ENCODE measurements at regions of chr2 and their contacts with region 1.

Region 1: DNA sequence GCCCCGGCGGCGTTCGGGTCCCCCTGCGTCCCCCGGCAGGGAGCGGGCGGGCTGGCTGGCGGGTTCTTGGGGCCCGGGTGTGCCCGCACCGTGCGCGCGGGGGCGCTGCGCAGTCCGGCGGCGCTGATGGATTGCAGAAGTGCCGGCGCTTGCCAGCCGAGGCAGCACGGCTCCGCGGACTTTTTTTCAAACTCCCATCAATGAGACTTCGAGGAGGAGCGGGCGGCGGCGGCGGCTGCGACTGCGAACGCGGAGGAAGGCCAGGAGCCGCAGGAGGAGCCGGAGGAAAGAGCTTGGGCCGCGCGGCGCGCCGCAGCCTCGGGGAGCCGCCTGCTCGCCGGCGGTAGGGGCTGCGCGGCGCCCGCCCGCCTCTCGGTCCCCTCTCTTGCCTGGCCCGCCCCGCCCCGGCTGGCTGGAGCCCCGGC is at the start of gene GLI2:
- DNase-seq: peak; percentile 82
- ATAC-seq: peak; percentile 56
- H3K4me3 ChIP-seq: peak within 1 kb of the TSS; percentile 79
- H3K27ac ChIP-seq: 0 out of 2 replicates have a peak within 1 kb of the TSS, but pooled peaks have one; percentile 36
- H3K4me1 ChIP-seq: peaks cover 18% of the 10 kb centered on the region
- H3K27me3 ChIP-seq: no peaks in the 10 kb centered on the region
- CTCF ChIP-seq: peak; percentile 81
- total RNA-seq, gene GLI2: 4.0 and 30.3 TPM in 2 replicates

Region 2: GRCh38 chr2:120699292-120699691 is 36.5 kb before region 1 on chr2:
- CTCF ChIA-PET with region 1: interaction called, 3 read pairs
- POLR2A ChIA-PET with region 1: no interaction called
- intact Hi-C with region 1: loop called (anchors 5 kb)
- DNase-seq: no peak
- ATAC-seq: no peak
- H3K4me3 ChIP-seq: no peak overlapping the region
- H3K27ac ChIP-seq: no peak overlapping the region
- H3K4me1 ChIP-seq: peaks cover 23% of the 10 kb centered on the region
- H3K27me3 ChIP-seq: no peaks in the 10 kb centered on the region
- CTCF ChIP-seq: no peak

Region 3: DNA sequence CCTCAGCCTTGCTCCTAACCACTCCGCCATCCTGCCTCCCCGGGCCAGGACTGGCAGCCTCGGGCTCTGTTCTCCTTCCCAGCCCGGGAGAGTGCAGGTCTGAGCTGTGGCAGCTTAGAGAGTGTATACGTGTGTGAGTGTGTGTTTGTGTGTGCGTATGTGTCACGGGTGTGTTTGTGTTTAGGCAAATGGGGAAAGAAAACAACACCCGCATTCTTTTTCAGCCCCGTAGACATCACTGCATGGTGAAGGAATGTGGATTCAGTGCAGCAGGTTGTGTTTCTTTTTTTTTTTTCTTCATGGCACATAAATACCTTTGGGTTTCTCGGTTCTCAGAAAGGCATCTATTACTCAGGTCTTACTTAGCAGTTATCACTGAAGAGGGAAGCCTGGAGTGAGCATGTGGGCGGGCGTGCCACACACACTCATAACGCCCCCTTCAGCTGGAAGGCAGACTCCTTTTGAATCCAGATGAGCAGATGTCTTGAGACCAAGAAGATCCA is 44.1 kb after region 1 on chr2:
- CTCF ChIA-PET with region 1: no interaction called
- POLR2A ChIA-PET with region 1: interaction called, 3 read pairs
- intact Hi-C with region 1: loop called (anchors 5 kb)
- DNase-seq: peak; percentile 32
- ATAC-seq: peak; percentile 31; the same call in 1 of the 2 replicates
- H3K4me3 ChIP-seq: no peak overlapping the region
- H3K27ac ChIP-seq: no peak overlapping the region
- H3K4me1 ChIP-seq: peaks cover 16% of the 10 kb centered on the region
- H3K27me3 ChIP-seq: no peaks in the 10 kb centered on the region
- CTCF ChIP-seq: no peak; the same call in 1 of the 2 replicates

Region 4: DNA sequence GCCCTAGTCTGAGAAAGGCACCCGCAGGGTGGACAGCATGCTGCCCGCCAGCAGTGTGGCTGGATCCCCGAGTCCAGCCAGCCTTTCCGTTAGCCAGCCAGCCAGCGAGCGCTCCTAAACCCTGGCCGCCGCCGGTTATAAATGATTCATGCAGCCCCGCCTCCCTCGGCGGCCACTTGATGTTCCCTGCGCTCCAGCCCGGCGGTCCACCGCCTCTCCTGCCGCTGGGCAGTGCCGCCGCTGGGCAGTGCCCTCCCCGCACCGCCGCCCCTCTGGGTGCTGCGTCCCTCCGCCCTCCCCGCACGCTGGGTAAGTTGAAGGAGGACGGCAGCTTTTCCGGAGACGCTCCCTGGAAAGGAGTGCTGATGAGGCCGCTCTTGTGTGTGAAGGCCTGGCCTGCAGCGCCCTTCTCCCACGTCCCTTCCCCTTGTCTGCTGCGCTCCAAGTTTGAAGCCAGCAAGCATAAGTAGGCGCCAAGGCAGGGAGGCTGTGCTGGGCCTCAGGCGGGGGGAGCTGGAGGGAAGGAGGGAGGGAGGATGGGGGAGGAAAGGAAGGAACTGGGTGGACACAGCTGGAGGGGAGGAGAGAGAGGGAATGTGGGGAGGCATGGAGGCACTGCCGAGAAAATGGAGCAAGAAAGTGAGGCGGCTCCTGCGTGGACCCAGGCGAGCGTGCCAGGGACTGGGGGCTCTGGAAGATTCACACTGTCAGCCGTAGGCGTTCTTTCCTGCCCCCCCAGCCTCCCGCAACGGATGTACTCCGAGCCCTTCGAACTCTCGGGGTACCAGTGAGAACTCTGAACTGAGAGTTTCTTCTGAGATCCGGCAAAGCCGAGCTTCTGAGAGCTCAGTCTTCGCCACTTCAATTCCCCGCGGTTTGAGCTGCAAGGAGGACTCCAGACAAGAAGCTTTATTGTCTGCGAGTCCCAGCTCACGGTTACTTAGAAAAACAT is 131.8 kb after region 1 on chr2:
- CTCF ChIA-PET with region 1: interaction called, 4 read pairs
- POLR2A ChIA-PET with region 1: no interaction called
- intact Hi-C with region 1: loop called (anchors 5 kb)
- DNase-seq: peak; percentile 64
- ATAC-seq: peak; percentile 96
- H3K4me3 ChIP-seq: peak overlapping the region; percentile 46; the same call in 1 of the 2 replicates
- H3K27ac ChIP-seq: no peak overlapping the region
- H3K4me1 ChIP-seq: peaks cover 21% of the 10 kb centered on the region
- H3K27me3 ChIP-seq: no peaks in the 10 kb centered on the region
- CTCF ChIP-seq: no peak

Region 5: GRCh38 chr2:120934574-120935340 is 199.0 kb after region 1 on chr2:
- CTCF ChIA-PET with region 1: interaction called, 3 read pairs
- POLR2A ChIA-PET with region 1: no interaction called
- intact Hi-C with region 1: loop called (anchors 2 kb)
- DNase-seq: peak; percentile 98
- ATAC-seq: peak; percentile 76
- H3K4me3 ChIP-seq: peak overlapping the region; percentile 51
- H3K27ac ChIP-seq: peak overlapping the region; percentile 93
- H3K4me1 ChIP-seq: peaks cover 72% of the 10 kb centered on the region
- H3K27me3 ChIP-seq: no peaks in the 10 kb centered on the region
- CTCF ChIP-seq: no peak

Region 6: DNA sequence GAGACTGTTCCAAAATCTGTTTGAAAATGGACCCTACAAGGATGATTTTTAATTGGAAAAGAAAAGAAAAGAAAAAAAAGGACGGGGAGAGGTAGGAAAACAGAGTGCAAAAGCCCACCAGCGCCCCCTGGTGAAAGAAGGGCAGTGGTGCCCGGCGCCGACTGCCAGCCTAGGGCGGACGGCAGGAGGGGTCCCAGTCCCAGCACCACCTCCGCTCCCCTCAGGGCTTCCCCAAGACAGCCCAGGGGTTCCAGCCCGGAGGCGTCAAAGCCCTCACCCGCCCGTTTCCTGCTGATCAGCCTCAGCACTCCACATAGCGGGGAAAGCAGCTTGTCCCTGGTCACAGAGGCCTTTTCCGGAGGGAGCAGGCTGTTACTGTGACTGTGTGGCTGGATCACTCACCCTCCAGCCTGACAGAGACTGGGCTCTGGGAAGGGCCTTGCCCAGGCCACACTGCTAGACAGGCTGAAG is 335.3 kb after region 1 on chr2:
- CTCF ChIA-PET with region 1: interaction called, 5 read pairs
- POLR2A ChIA-PET with region 1: interaction called, 5 read pairs
- intact Hi-C with region 1: loop called (anchors 1 kb)
- DNase-seq: peak; percentile 75
- ATAC-seq: peak; percentile 51
- H3K4me3 ChIP-seq: no peak overlapping the region
- H3K27ac ChIP-seq: no peak overlapping the region
- H3K4me1 ChIP-seq: peaks cover 14% of the 10 kb centered on the region
- H3K27me3 ChIP-seq: no peaks in the 10 kb centered on the region
- CTCF ChIP-seq: peak; percentile 94

Region 7: GRCh38 chr2:121519732-121520640 is 784.2 kb after region 1 on chr2:
- CTCF ChIA-PET with region 1: no interaction called
- POLR2A ChIA-PET with region 1: no interaction called
- intact Hi-C with region 1: no loop called
- DNase-seq: no peak
- ATAC-seq: no peak
- H3K4me3 ChIP-seq: no peak overlapping the region
- H3K27ac ChIP-seq: no peak overlapping the region
- H3K4me1 ChIP-seq: no peaks in the 10 kb centered on the region
- H3K27me3 ChIP-seq: no peaks in the 10 kb centered on the region
- CTCF ChIP-seq: no peak